HEK293T (cell line): ENCODE measurements at regions of chr4 and their contacts with region 1.

Region 1: DNA sequence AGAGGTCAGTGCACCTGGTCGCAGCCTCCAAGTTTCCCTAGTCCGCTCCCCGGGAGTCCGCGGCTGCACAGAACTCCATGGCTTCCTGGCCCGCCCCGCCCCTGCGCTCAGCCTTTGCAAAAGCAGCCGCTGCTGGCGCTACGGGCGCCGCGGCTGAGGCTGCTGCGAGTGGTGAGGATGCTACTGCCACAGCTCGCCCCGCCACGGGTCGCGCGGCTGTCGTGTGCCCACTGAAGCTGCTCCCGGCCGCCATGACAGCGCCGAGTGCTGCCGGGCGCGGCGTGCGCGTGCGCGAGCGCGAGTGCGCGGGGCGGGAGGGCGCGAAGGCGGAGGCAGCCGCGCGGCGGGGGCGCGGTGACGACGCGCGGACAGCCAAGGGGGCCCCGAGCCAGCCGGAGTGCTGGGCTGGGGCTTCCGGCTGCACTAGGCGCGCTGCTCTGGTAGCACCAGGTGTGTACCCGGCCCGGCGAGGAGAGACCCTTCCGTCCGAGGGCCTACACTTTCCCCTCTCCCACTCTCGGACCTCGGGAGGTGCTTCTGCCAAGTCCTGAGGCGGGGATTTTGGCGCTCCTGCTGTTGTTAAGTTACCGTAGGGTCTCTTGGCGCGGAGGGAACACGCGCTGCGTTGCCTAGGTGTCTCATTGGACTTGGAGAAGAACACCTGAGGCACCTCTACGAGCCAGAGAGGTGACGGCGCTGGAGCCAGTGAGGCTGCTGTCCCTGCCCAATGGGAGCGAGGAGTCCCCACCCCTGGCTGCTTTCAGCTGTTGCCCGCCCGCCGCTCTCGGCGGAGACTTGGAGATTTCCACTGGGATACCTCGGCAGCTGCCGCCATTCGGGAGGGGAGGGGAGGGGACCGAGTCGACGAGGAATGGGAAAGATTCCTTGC is 619 bp upstream of the LRBA start:
- DNase-seq: peak; percentile 87

Region 2: GRCh38 chr4:151004222-151004621 is 11.5 kb before region 1 on chr4:
- CTCF ChIA-PET with region 1: interaction called, 4 read pairs
- POLR2A ChIA-PET with region 1: interaction called, 10 read pairs
- DNase-seq: no peak